Aorta (tissue), 5 donors: ENCODE measurements at regions of chr1 and their contacts with region 1.

Region 1: GRCh38 chr1:111507411-111508201 is 4.2 kb upstream of the ADORA3 start:
- DNase-seq: peak; percentile 91 to 93
- ATAC-seq: peak; percentile 82
- H3K4me3 ChIP-seq: no peak overlapping the region
- H3K27ac ChIP-seq: peak overlapping the region; percentile 83 to 94
- H3K4me1 ChIP-seq: peaks cover 0 to 4% of the 10 kb centered on the region in 2 donors
- H3K27me3 ChIP-seq: no peaks in the 10 kb centered on the region

Region 2: GRCh38 chr1:111538343-111539025 is 30.9 kb after region 1 on chr1:
- intact Hi-C with region 1: no loop called
- DNase-seq: no peak
- ATAC-seq: no peak
- H3K4me3 ChIP-seq: no peak overlapping the region
- H3K27ac ChIP-seq: no peak overlapping the region
- H3K4me1 ChIP-seq: peaks cover 3 to 10% of the 10 kb centered on the region in 2 donors
- H3K27me3 ChIP-seq: no peaks in the 10 kb centered on the region

Region 3: DNA sequence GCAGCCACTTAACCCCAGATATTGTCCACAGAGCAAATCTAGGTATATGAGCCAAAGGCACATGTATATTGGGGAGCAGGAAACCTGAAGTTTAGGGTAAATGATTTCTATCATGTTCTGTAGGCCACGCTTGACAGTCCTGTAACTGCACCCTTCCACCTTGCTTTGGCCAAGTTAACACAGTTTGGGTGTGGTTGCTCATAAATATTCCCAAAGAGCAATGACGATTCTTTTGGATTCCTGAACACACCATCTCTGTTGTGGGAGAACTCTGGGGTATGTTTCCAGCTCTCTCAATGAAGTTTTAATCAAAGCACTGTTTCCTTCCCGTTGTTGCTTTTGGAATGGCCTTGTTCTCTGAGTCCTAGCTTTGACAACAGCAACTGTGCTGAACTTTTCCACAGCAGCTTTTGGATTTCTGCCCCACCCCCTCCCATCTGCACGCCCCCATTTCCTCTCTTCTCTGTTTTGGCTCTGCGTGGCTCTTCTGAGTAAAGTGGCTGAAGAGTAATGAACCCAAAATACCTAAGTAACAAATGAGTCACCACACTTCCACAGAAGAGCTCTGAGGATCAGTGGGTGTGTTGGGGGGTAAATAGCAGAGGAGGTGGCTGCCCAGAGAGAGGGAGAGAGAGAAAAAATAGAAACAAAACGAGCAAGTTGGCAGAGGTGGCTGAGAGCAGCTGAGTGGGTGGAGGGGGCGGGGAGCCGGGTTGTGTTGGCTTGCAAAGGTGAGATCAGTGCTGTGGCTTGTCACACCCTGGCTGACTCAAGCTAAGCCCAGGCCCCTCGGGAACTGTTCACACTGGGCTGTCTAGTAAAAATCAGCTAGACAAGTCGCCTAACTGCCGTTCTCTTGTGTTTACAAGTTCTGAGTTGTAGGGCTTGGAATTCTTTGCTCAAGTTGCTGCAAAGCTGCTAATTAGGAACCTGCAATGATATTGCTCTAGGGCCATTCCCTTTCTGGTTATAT is 85.1 kb after region 1 on chr1:
- intact Hi-C with region 1: loop called in 1 of 2 experiments (anchors 2 kb)
- DNase-seq: peak; percentile 94 to 95
- ATAC-seq: peak; percentile 93
- H3K4me3 ChIP-seq: no peak overlapping the region
- H3K27ac ChIP-seq: peak overlapping the region; percentile 95 to 96
- H3K4me1 ChIP-seq: peaks cover 2 to 11% of the 10 kb centered on the region in 2 donors
- H3K27me3 ChIP-seq: no peaks in the 10 kb centered on the region

Region 4: DNA sequence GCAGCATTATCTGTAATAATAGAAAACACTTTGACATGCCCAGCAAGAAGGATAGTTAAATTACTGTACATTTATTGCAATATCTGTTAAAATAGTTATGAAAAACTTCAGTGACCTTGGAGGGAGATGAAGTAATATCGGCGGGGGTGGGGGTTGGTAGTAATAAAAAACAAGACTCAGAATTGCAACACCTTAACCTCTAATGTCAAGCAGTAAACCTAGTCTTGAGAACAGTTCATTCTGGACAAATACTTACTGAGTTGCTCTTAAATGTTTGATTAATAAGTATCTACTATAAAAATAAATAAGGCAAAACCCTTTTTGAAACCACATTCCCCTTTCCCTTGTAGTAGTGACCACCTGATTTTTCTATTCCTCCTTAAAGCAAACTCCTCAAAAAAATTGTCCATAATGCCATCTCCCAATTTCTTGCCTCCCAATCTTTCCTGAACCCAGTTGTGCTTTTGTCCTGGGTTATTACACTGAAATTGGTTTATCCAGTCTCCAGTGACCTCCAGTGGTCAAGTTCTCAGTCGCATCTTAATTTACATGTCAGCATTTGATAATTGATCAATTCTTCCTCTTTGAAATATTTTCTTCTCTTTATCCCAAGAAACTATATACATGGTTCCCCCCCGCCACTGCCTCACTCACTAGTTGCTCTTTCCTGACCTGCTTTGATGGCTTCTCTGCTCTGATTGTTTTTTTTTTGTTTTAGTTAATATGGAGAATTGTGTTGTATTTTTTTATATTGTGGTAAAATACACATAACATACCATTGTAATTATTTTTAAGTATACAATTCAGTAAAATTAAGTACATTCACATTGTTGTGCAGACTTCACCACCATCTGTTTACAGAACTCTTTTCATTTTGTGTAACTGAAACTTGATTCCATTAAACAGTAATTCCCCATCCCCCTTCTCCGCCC is 148.7 kb after region 1 on chr1:
- intact Hi-C with region 1: loop called (anchors 2 to 5 kb)
- DNase-seq: no peak
- ATAC-seq: peak; percentile 80
- H3K4me3 ChIP-seq: no peak overlapping the region
- H3K27ac ChIP-seq: no peak overlapping the region
- H3K4me1 ChIP-seq: peaks cover 2 to 5% of the 10 kb centered on the region in 2 donors
- H3K27me3 ChIP-seq: no peaks in the 10 kb centered on the region

Region 5: GRCh38 chr1:111690306-111690617 is 182.7 kb after region 1 on chr1:
- intact Hi-C with region 1: loop called in 1 of 2 experiments (anchors 5 kb)
- DNase-seq: peak; percentile 52 to 67
- ATAC-seq: no peak
- H3K4me3 ChIP-seq: no peak overlapping the region
- H3K27ac ChIP-seq: no peak overlapping the region
- H3K4me1 ChIP-seq: peaks cover 0 to 2% of the 10 kb centered on the region in 2 donors
- H3K27me3 ChIP-seq: no peaks in the 10 kb centered on the region